A549 (cell line): ENCODE measurements at regions of chr17 and their contacts with region 1.

Region 1: GRCh38 chr17:39244600-39245570 is 19.1 kb upstream of the STAC2 start:
- DNase-seq: peak; percentile 87 to 91
- ATAC-seq: peak; percentile 88 to 95
- H3K4me3 ChIP-seq: no peak overlapping the region
- H3K27ac ChIP-seq: no peak overlapping the region
- H3K4me1 ChIP-seq: peaks cover 9% of the 10 kb centered on the region; the same call in 1 of the 3 replicates
- CTCF ChIP-seq: peak; percentile 97
- EP300 ChIP-seq: no peak
- POLR2A ChIP-seq: no peak
- RAD21 ChIP-seq: peak; percentile 92 to 99

Region 2: GRCh38 chr17:39164675-39165143 is 80.2 kb before region 1 on chr17:
- CTCF ChIA-PET with region 1: interaction called, 453 read pairs
- POLR2A ChIA-PET with region 1: interaction called, 3 read pairs
- DNase-seq: peak; percentile 91 to 99
- ATAC-seq: peak; percentile 81 to 92
- H3K4me3 ChIP-seq: peak overlapping the region; percentile 16; the same call in 2 of the 3 replicates
- H3K27ac ChIP-seq: peak overlapping the region in 1 of 2 experiments; percentile 51; a peak in 3 of 6 replicates
- H3K4me1 ChIP-seq: peaks cover 6% of the 10 kb centered on the region; the same call in 2 of the 3 replicates
- CTCF ChIP-seq: peak; percentile 84
- EP300 ChIP-seq: no peak
- POLR2A ChIP-seq: no peak
- RAD21 ChIP-seq: peak; percentile 42 to 61; a peak in 3 of 5 replicates

Region 3: GRCh38 chr17:39199820-39200069 is 45.1 kb before region 1 on chr17:
- CTCF ChIA-PET with region 1: interaction called, 1,140 read pairs
- POLR2A ChIA-PET with region 1: interaction called, 34 read pairs
- DNase-seq: peak; percentile 98 to 100
- ATAC-seq: peak; percentile 41 to 57; a peak in 4 of 6 replicates
- H3K4me3 ChIP-seq: peak overlapping the region; percentile 96
- H3K27ac ChIP-seq: peak overlapping the region; percentile 96
- H3K4me1 ChIP-seq: peaks cover 47% of the 10 kb centered on the region
- CTCF ChIP-seq: no peak
- EP300 ChIP-seq: no peak
- POLR2A ChIP-seq: peak; percentile 30; the same call in 1 of the 2 replicates
- RAD21 ChIP-seq: no peak

Region 4: GRCh38 chr17:39225959-39226683 is 18.8 kb before region 1 on chr17:
- CTCF ChIA-PET with region 1: interaction called, 1,140 read pairs
- POLR2A ChIA-PET with region 1: no interaction called
- DNase-seq: peak; percentile 60 to 91
- ATAC-seq: peak; percentile 26 to 86; a peak in 5 of 6 replicates
- H3K4me3 ChIP-seq: peak overlapping the region; percentile 46
- H3K27ac ChIP-seq: peak overlapping the region; percentile 40 to 71; a peak in 5 of 6 replicates
- H3K4me1 ChIP-seq: peaks cover 28% of the 10 kb centered on the region
- CTCF ChIP-seq: no peak
- EP300 ChIP-seq: no peak
- POLR2A ChIP-seq: no peak
- RAD21 ChIP-seq: no peak

Region 5: GRCh38 chr17:39281806-39282205 is 36.9 kb after region 1 on chr17:
- CTCF ChIA-PET with region 1: interaction called, 10 read pairs
- POLR2A ChIA-PET with region 1: no interaction called
- DNase-seq: no peak
- ATAC-seq: no peak
- H3K4me3 ChIP-seq: no peak overlapping the region
- H3K27ac ChIP-seq: no peak overlapping the region
- H3K4me1 ChIP-seq: peaks cover 7% of the 10 kb centered on the region; the same call in 2 of the 3 replicates
- CTCF ChIP-seq: no peak
- EP300 ChIP-seq: no peak
- POLR2A ChIP-seq: no peak
- RAD21 ChIP-seq: no peak